GM10248 (cell line): ENCODE measurements at regions of chr10 and their contacts with region 1.

Region 1: DNA sequence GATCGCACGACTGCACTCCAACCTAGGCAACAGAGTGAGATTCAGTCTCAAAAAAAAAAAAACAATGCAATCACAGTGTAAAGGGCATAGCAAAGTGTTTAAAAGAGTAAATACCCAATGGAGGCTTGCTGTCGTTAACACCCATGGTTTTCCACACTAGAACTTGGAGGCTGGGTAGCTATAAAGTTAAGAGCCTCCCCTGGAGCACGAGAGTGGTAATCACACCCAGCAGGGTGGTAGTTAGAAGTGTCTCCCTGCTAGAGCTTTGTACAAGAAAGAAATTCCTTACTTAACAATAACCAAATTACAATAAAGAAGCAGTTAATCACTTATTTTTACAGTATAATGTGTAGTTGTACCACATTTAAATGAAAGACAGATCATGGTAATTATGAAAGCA is 1078.9 kb downstream of the NRG3 start:
- DNase-seq: no peak
- CTCF ChIP-seq: no peak

Region 2: DNA sequence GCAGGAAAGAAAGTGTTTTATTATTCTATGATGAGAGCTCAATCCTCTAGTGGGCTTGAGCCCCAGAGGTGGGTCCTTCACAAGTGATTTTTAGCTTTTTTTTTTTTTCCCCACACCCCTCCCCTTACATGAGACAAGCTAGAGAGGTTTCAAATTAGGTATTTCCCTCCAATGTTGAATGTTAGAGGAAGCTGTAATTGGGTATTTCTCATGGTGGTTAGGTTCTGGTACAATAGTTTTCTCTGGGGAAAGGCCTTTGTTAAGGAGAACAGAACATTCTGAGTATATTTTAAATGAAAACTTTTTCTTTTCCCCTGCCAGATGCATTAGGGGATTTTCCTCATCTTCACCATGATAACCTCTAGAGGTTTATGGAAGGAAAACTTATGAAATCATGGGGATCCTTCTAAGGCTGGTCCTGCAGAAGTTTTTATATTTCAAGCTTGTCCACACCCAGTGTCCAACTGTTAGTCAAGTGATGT is 39.2 kb before region 1 on chr10:
- CTCF ChIA-PET with region 1: no interaction called
- POLR2A ChIA-PET with region 1: no interaction called
- DNase-seq: no peak
- CTCF ChIP-seq: no peak

Region 3: GRCh38 chr10:82942286-82943099 is 11.4 kb before region 1 on chr10:
- CTCF ChIA-PET with region 1: interaction called, 10 read pairs
- POLR2A ChIA-PET with region 1: no interaction called
- DNase-seq: no peak
- CTCF ChIP-seq: no peak

Region 4: GRCh38 chr10:84375011-84375410 is 1421.1 kb after region 1 on chr10:
- CTCF ChIA-PET with region 1: no interaction called
- POLR2A ChIA-PET with region 1: no interaction called
- DNase-seq: peak; percentile 16
- CTCF ChIP-seq: peak; percentile 68